Common myeloid progenitor, CD34-positive (primary cell): ENCODE measurements at regions of chr7 and their contacts with region 1.

Region 1: DNA sequence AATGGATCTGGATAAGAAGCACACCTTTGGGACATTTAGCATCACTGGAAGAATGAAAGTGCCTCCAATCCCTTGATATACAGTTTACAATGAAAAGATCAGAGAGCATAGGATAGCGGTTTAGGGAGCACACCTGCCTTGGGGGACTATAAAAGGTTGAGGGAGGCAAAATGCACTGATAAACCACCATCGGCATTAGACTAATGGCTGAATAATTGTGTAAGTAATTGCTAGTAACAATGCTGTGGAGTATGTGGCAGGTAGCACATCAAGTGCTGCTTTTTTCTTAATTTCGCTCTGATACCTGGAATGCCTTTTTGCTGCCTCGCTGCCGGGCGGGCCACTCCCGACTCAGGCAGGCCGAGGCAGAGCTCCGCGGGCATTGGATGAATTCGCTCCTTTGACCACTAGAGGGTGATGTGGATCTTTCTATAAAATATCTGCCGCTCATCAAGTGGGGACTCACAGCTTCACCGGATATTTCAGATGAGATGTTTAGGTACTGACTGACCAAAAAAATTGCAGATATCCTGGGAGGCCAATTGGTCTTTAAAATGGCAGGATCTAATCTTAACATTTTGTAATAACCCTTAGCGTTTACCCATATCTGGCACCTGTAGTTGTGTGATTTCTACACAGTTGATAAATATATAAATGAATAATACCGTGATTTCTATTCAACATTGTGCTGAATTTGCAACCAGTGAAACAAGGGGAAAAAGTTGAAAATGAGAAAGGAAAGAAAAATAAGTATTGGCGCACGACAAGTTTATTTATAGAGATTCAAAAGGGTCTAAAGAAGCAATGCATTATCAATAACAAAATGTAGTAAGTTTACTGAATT is 116.8 kb upstream of the PRSS1 start:
- DNase-seq: peak; percentile 81 to 88 (median 87)
- H3K4me3 ChIP-seq: peak overlapping the region in 1 of 7 experiments; percentile 11
- H3K27ac ChIP-seq: no peak overlapping the region
- H3K4me1 ChIP-seq: peaks cover 0 to 25% (median 13%) of the 10 kb centered on the region in 4 experiments
- H3K27me3 ChIP-seq: no peaks in the 10 kb centered on the region

Region 2: GRCh38 chr7:142603870-142604448 is 28.6 kb before region 1 on chr7:
- CTCF ChIA-PET with region 1: interaction called, 30 read pairs
- POLR2A ChIA-PET with region 1: no interaction called
- DNase-seq: peak; percentile 68 to 87 (median 83)
- H3K4me3 ChIP-seq: no peak overlapping the region
- H3K27ac ChIP-seq: no peak overlapping the region
- H3K4me1 ChIP-seq: peaks cover 0 to 29% (median 22%) of the 10 kb centered on the region in 4 experiments
- H3K27me3 ChIP-seq: no peaks in the 10 kb centered on the region

Region 3: DNA sequence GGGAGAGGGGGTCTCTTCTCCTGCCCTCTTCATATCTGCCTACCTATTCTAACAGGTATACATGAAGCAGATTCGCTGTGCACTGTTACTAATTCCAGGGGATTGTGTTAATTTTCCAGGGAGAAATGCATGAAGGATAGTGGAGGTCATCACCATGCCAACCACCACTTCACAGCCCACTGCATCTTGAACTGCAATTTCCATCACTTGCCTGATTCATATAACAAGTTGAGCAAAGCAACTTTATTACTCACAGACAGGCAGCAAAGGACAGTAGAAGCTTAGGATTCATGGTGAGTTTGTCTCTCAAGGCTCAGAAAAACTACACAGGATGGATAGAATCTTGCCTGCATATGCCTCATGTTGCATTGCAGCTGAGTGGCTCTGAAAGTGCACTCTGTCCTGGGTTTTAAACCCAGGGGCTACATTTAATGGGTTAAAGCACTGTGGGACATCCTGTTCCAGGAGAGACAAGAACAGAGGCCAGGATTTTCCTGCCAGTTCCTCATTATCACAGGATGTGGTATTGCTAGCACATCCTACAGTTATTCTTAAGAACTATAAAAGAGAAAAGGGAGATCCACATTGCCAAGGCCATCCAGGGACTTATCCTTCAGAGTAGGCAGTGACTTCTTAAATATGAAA is 20.2 kb before region 1 on chr7:
- CTCF ChIA-PET with region 1: interaction called, 19 read pairs
- POLR2A ChIA-PET with region 1: no interaction called
- DNase-seq: no peak
- H3K4me3 ChIP-seq: no peak overlapping the region
- H3K27ac ChIP-seq: no peak overlapping the region
- H3K4me1 ChIP-seq: peaks cover 2 to 52% (median 39%) of the 10 kb centered on the region in 4 experiments
- H3K27me3 ChIP-seq: no peaks in the 10 kb centered on the region

Region 4: GRCh38 chr7:142620402-142620801 is 12.1 kb before region 1 on chr7:
- CTCF ChIA-PET with region 1: interaction called, 28 read pairs
- POLR2A ChIA-PET with region 1: no interaction called
- DNase-seq: no peak
- H3K4me3 ChIP-seq: no peak overlapping the region
- H3K27ac ChIP-seq: no peak overlapping the region
- H3K4me1 ChIP-seq: peaks cover 0 to 25% (median 12%) of the 10 kb centered on the region in 4 experiments
- H3K27me3 ChIP-seq: no peaks in the 10 kb centered on the region

Region 5: DNA sequence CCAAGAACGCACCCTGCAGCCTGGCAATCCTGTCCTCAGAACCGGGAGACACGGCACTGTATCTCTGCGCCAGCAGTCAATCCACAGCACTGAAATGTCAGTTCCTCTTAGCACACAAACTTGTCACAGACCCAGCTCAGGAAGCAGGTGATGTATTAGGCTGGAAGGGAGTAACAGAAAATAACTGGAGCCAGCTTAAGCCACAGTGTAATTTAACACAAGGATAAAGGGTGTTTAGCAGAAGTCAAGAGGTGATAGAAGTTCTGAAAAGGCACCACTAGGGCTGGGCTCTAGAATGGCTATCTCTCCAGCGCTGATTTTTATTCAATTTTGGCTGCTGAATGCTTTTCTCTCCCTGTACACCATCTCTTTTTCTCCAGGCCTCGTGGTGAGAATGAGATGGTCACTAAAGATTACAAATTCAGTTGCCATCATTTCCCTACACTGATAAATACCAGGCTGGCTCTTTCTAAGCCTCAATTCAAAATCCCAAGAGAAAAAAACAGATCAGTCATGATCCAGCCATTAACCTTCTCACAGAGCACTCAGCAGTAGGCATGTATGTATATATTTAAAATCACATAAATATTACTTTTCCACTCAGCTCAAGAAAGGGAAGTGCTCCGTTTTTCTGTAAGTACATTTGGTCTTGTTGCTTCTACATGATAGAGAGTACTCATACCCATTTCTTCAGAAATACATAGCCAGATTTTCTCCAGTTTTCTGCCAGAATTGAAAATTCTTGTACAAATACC is 14.1 kb after region 1 on chr7:
- CTCF ChIA-PET with region 1: interaction called, 15 read pairs
- POLR2A ChIA-PET with region 1: interaction called, 5 read pairs
- DNase-seq: peak; percentile 69 to 95 (median 90)
- H3K4me3 ChIP-seq: peak overlapping the region in 6 of 7 experiments; percentile 49 to 78 (median 63)
- H3K27ac ChIP-seq: peak overlapping the region; percentile 46 to 84
- H3K4me1 ChIP-seq: peaks cover 9 to 42% (median 23%) of the 10 kb centered on the region in 4 experiments
- H3K27me3 ChIP-seq: no peaks in the 10 kb centered on the region

Region 6: GRCh38 chr7:142669074-142669654 is 36.7 kb after region 1 on chr7:
- CTCF ChIA-PET with region 1: interaction called, 10 read pairs
- POLR2A ChIA-PET with region 1: no interaction called
- DNase-seq: peak; percentile 31 to 50 (median 49)
- H3K4me3 ChIP-seq: no peak overlapping the region
- H3K27ac ChIP-seq: no peak overlapping the region
- H3K4me1 ChIP-seq: peaks cover 17 to 43% (median 34%) of the 10 kb centered on the region in 4 experiments
- H3K27me3 ChIP-seq: no peaks in the 10 kb centered on the region

Region 7: GRCh38 chr7:142689439-142690120 is 57.1 kb after region 1 on chr7:
- CTCF ChIA-PET with region 1: interaction called, 11 read pairs
- POLR2A ChIA-PET with region 1: no interaction called
- DNase-seq: peak in 2 of 3 donors; percentile 58 to 78
- H3K4me3 ChIP-seq: no peak overlapping the region
- H3K27ac ChIP-seq: peak overlapping the region in 1 of 2 experiments; percentile 34
- H3K4me1 ChIP-seq: peaks cover 0 to 21% (median 18%) of the 10 kb centered on the region in 4 experiments
- H3K27me3 ChIP-seq: no peaks in the 10 kb centered on the region